Ascending aorta (tissue), 2 donors: ENCODE measurements at regions of chr10 and their contacts with region 1.

Region 1: DNA sequence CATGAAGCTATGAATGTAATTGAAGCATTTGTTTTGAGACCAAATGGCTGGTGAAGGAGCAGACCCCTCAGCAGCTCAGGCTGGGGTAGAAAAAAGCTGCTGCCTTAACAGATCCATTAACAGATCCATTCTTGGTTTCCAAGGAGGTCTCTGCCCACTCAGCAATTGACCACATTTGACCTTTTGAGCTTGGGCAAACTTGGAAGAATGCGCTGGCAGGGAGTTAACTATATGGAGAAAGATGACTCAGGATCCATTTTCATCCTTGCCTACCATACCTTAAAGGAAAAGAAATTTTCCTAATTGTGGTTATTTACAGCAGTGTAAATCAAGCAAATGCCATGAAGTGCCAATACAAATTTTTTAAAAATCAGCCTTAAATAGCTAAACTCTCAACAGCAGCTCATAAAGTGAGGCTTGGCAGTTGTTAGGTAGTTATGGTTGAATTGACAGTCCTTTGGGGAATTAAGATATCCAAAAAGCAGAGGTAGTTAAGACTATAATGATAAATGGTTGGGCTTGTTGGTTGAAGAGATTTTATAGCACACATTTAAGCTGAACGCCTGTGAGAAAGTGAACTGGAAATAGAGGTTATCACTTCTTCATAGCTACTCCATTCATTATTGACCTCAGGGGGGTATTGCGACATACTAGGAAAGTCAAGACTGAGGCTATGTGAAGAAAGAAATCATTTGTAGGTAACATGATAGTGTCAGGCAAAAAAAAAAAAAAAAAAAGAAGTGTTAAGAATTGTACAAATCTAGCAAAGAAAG is 83.9 kb downstream of the MKX start:
- DNase-seq: no peak
- H3K4me3 ChIP-seq: no peak overlapping the region
- H3K27ac ChIP-seq: no peak overlapping the region
- H3K4me1 ChIP-seq: no peaks in the 10 kb centered on the region
- H3K27me3 ChIP-seq: no peaks in the 10 kb centered on the region
- CTCF ChIP-seq: no peak

Region 2: DNA sequence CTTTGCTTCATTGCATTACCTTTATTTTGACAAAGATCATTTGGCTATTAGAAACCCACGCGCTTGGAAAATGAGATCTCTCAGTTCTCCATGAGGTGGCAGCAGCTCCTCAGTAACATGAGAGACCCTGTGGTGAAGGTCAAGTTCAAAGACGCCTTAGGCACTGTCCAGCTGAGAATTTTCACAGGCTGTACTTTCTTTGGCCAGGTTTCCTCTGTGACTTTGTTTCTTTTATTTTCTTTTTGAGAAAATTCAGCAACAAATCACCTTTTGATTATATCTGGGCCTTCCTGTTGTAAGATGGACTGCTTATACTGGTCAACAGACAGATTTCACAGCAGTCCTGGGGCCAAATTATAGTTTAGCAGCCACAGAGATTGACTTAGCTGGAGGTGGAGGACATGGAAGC is 103.1 kb before region 1 on chr10:
- intact Hi-C with region 1: loop called (anchors 2 kb)
- DNase-seq: peak in 1 of 2 donors; percentile 67
- H3K4me3 ChIP-seq: no peak overlapping the region
- H3K27ac ChIP-seq: no peak overlapping the region
- H3K4me1 ChIP-seq: no peaks in the 10 kb centered on the region
- H3K27me3 ChIP-seq: no peaks in the 10 kb centered on the region
- CTCF ChIP-seq: peak; percentile 75 to 86 (median 77)

Region 3: DNA sequence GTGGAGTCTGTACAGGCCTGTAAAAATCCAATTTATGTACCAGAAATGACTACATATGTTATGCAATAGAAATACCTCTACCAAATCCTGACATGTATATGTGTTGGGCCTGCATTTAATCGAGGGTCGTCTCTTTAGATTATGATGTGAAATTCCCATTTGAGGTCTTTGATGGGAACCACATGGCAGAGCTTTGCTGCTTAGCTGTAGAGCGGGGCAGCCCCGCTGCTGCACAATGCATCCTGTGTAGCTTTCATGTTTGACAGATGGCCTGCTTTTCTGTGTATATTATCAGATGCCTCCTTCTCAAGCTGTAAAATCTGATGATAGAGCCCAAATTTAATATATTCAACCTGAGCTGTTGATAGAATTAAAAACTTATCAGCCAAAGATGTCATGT is 91.8 kb before region 1 on chr10:
- intact Hi-C with region 1: no loop called
- DNase-seq: no peak
- H3K4me3 ChIP-seq: no peak overlapping the region
- H3K27ac ChIP-seq: no peak overlapping the region
- H3K4me1 ChIP-seq: no peaks in the 10 kb centered on the region
- H3K27me3 ChIP-seq: no peaks in the 10 kb centered on the region
- CTCF ChIP-seq: no peak